Aorta (tissue), 5 donors: ENCODE measurements at regions of chr4 and their contacts with region 1.

Region 1: GRCh38 chr4:141346144-141346543 is 125.4 kb downstream of the ZNF330 start:
- DNase-seq: no peak
- ATAC-seq: peak; percentile 74
- H3K4me3 ChIP-seq: no peak overlapping the region
- H3K27ac ChIP-seq: no peak overlapping the region
- H3K4me1 ChIP-seq: peaks cover 0 to 5% of the 10 kb centered on the region in 2 donors
- H3K27me3 ChIP-seq: no peaks in the 10 kb centered on the region

Region 2: GRCh38 chr4:141473952-141474351 is 127.8 kb after region 1 on chr4:
- intact Hi-C with region 1: loop called in 1 of 2 experiments (anchors 5 kb)
- DNase-seq: no peak
- ATAC-seq: peak; percentile 19
- H3K4me3 ChIP-seq: no peak overlapping the region
- H3K27ac ChIP-seq: no peak overlapping the region
- H3K4me1 ChIP-seq: peaks cover 1 to 3% of the 10 kb centered on the region in 2 donors
- H3K27me3 ChIP-seq: no peaks in the 10 kb centered on the region

Region 3: GRCh38 chr4:141636082-141636770 is 290.1 kb after region 1 on chr4 and contains the start of gene IL15:
- intact Hi-C with region 1: loop called (anchors 5 kb)
- DNase-seq: peak; percentile 85 to 89
- ATAC-seq: peak; percentile 84
- H3K4me3 ChIP-seq: peak within 1 kb of the TSS; percentile 76 to 97
- H3K27ac ChIP-seq: peak within 1 kb of the TSS; percentile 62 to 76
- H3K4me1 ChIP-seq: peaks cover 0 to 3% of the 10 kb centered on the region in 2 donors
- H3K27me3 ChIP-seq: no peaks in the 10 kb centered on the region
- total RNA-seq, gene IL15: 10.3 to 15.2 TPM

Region 4: GRCh38 chr4:141654098-141654497 is 308.0 kb after region 1 on chr4:
- intact Hi-C with region 1: loop called in 1 of 2 experiments (anchors 5 kb)
- DNase-seq: peak in 1 of 2 donors; percentile 52
- ATAC-seq: no peak
- H3K4me3 ChIP-seq: no peak overlapping the region
- H3K27ac ChIP-seq: peak overlapping the region; percentile 59 to 69
- H3K4me1 ChIP-seq: peaks cover 3 to 7% of the 10 kb centered on the region in 2 donors
- H3K27me3 ChIP-seq: no peaks in the 10 kb centered on the region

Region 5: GRCh38 chr4:141711014-141711610 is 365.0 kb after region 1 on chr4:
- intact Hi-C with region 1: loop called (anchors 5 kb)
- DNase-seq: no peak
- ATAC-seq: no peak
- H3K4me3 ChIP-seq: no peak overlapping the region
- H3K27ac ChIP-seq: no peak overlapping the region
- H3K4me1 ChIP-seq: peaks cover 0 to 5% of the 10 kb centered on the region in 2 donors
- H3K27me3 ChIP-seq: no peaks in the 10 kb centered on the region

Region 6: GRCh38 chr4:142095886-142096605 is 749.9 kb after region 1 on chr4:
- intact Hi-C with region 1: loop called in 1 of 2 experiments (anchors 5 kb)
- DNase-seq: peak in 1 of 2 donors; percentile 50
- ATAC-seq: no peak
- H3K4me3 ChIP-seq: no peak overlapping the region
- H3K27ac ChIP-seq: no peak overlapping the region
- H3K4me1 ChIP-seq: peaks cover 0 to 2% of the 10 kb centered on the region in 2 donors
- H3K27me3 ChIP-seq: no peaks in the 10 kb centered on the region